ENCODE measurements at regions of chr15 and their contacts with region 1.

Region 1: GRCh38 chr15:55196458-55197361 is at the start of gene RSL24D1:
- DNase-seq: peak; percentile 95 to 99
- ATAC-seq: peak; percentile 99
- H3K4me3 ChIP-seq: peak within 1 kb of the TSS; percentile 69
- H3K27ac ChIP-seq: peak within 1 kb of the TSS; percentile 92
- H3K4me1 ChIP-seq: peaks cover 34% of the 10 kb centered on the region
- CTCF ChIP-seq: peak; percentile 45
- EP300 ChIP-seq: no peak
- POLR2A ChIP-seq: peak; percentile 91
- RAD21 ChIP-seq: peak; percentile 14 to 31; a peak in 3 of 5 replicates
- polyA plus RNA-seq, gene RSL24D1: 171 and 257 TPM in 2 replicates

Region 2: GRCh38 chr15:54884312-54884711 is 312.4 kb before region 1 on chr15:
- CTCF ChIA-PET with region 1: no interaction called
- POLR2A ChIA-PET with region 1: no interaction called
- DNase-seq: no peak
- ATAC-seq: no peak
- H3K4me3 ChIP-seq: no peak overlapping the region
- H3K27ac ChIP-seq: no peak overlapping the region
- H3K4me1 ChIP-seq: no peaks in the 10 kb centered on the region
- CTCF ChIP-seq: no peak
- EP300 ChIP-seq: no peak
- POLR2A ChIP-seq: no peak
- RAD21 ChIP-seq: no peak

Region 3: DNA sequence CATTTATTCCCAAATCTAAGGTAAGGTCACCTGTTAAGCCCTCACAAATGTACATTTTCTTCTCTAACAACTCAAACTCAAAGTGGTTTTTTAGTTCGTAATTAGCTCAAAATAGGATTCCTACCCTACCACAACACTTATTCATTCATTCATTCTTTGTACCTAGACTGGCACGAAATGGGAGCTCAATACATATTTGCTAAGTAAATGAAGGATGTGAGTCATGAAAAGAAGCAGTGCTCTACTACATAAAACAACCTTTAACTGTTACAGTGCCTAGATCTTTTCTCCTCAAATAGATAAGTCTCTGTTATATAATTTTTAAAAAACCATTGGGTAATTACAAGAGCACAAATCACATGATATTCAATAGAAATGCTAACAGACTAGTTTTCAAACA is 13.0 kb before region 1 on chr15:
- CTCF ChIA-PET with region 1: interaction called, 3 read pairs
- POLR2A ChIA-PET with region 1: interaction called, 17 read pairs
- DNase-seq: no peak
- ATAC-seq: no peak
- H3K4me3 ChIP-seq: no peak overlapping the region
- H3K27ac ChIP-seq: no peak overlapping the region
- H3K4me1 ChIP-seq: peaks cover 14% of the 10 kb centered on the region
- CTCF ChIP-seq: no peak
- EP300 ChIP-seq: no peak
- POLR2A ChIP-seq: no peak
- RAD21 ChIP-seq: no peak